CD8-positive, alpha-beta memory T cell (primary cell): ENCODE measurements at regions of chr18 and their contacts with region 1.

Region 1: GRCh38 chr18:22342625-22343024 is 75.1 kb downstream of the CTAGE1 start:
- DNase-seq: peak in 4 of 5 donors; percentile 19 to 85 (median 40)
- H3K4me3 ChIP-seq: no peak overlapping the region
- H3K4me3 Mint-ChIP-seq: peak overlapping the region; percentile 4 to 95 (median 66)
- H3K27ac ChIP-seq: peak overlapping the region; percentile 48
- H3K27ac Mint-ChIP-seq: peak overlapping the region; percentile 84 to 99 (median 98)
- H3K4me1 ChIP-seq: peaks cover 76% of the 10 kb centered on the region
- H3K4me1 Mint-ChIP-seq: peaks cover 89 to 96% (median 93%) of the 10 kb centered on the region in 3 donors
- H3K27me3 ChIP-seq: no peaks in the 10 kb centered on the region
- H3K27me3 Mint-ChIP-seq: no peaks in the 10 kb centered on the region

Region 2: DNA sequence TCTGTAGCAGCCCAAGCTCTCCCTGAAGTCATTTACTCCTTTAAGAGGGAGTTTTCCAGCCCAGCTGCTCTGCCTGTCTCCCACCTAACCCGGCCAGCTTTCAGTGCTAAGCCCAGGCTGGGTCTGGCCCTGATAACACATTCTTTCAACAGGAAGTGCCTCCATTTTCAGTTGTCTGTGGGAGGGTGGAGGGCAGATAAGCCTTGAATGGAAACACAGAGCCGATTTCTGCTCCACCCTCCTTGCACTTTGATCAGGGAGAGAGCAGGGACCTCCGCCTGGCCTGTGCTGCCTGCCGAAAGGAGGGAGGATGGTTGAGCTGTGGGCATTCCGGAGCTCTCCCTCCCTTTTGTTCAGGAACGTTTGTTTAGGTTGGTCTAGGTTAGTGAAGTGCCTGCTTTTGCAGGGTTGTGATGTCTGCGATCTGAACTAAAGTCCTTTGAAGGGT is 148.4 kb before region 1 on chr18:
- CTCF ChIA-PET with region 1: no interaction called
- POLR2A ChIA-PET with region 1: no interaction called
- DNase-seq: no peak
- H3K4me3 ChIP-seq: no peak overlapping the region
- H3K4me3 Mint-ChIP-seq: no peak overlapping the region
- H3K27ac ChIP-seq: peak overlapping the region; percentile 33
- H3K27ac Mint-ChIP-seq: no peak overlapping the region
- H3K4me1 ChIP-seq: no peaks in the 10 kb centered on the region
- H3K4me1 Mint-ChIP-seq: peaks cover 0 to 5% (median 3%) of the 10 kb centered on the region in 3 donors
- H3K27me3 ChIP-seq: no peaks in the 10 kb centered on the region
- H3K27me3 Mint-ChIP-seq: peaks cover 29 to 42% of the 10 kb centered on the region in 2 donors

Region 3: DNA sequence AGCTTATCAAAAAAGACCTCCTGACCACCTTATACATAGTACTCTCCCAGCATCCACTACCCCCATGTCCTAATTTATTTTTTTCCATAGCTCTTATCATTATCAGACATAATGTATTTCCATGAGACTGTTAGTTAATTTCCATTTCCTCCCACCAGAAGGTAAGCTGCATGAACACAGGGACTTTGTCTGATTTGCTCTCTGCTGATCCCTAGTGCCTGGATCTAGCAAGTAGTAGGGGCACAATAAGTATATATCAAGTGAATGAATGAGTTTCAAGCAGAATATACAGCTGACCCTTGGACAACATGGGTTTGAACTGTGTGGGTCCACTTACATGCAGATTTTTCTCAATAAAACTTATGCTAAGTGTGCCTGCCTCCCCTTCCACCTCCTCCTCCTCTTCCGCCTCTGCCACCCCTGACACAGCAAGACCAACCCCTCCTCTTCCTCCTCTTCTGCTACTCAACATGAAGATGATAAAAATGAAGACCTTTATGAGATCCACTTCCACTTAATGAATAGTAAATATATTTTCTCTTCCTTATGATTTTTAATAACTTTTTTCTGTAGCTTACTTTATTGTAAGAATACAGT is 21.3 kb after region 1 on chr18:
- CTCF ChIA-PET with region 1: interaction called, 10 read pairs
- POLR2A ChIA-PET with region 1: interaction called, 3 read pairs
- DNase-seq: peak in 1 of 5 donors; percentile 24
- H3K4me3 ChIP-seq: no peak overlapping the region
- H3K4me3 Mint-ChIP-seq: no peak overlapping the region
- H3K27ac ChIP-seq: no peak overlapping the region
- H3K27ac Mint-ChIP-seq: no peak overlapping the region
- H3K4me1 ChIP-seq: no peaks in the 10 kb centered on the region
- H3K4me1 Mint-ChIP-seq: peaks cover 5 to 6% (median 6%) of the 10 kb centered on the region in 3 donors
- H3K27me3 ChIP-seq: no peaks in the 10 kb centered on the region
- H3K27me3 Mint-ChIP-seq: peaks cover 5% of the 10 kb centered on the region in 2 donors